ENCODE measurements at regions of chr20 and their contacts with region 1.

Region 1: DNA sequence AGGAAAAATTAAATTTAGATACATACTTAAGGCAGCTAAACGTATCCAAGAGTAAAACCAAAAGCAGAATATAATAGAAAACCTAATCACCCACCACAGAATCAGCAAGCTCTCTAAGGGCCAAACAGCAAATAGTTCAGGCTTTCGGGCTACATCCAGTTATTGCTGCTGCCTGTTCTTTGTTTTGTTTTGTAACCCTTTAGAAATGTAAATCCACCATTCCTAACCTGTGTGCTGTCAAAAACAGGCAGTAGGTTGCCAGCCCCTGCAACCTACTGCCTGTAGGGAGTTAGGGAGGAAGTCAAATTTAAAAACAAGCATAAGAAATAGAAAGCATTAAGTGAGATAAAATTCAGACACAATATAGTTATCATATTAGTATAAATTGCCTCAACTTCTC is 225.9 kb downstream of the PTPRT start:
- DNase-seq: no peak
- H3K4me3 ChIP-seq: no peak overlapping the region
- H3K27ac ChIP-seq: no peak overlapping the region
- H3K4me1 ChIP-seq: no peaks in the 10 kb centered on the region
- H3K27me3 ChIP-seq: peaks cover 33% of the 10 kb centered on the region
- CTCF ChIP-seq: no peak

Region 2: DNA sequence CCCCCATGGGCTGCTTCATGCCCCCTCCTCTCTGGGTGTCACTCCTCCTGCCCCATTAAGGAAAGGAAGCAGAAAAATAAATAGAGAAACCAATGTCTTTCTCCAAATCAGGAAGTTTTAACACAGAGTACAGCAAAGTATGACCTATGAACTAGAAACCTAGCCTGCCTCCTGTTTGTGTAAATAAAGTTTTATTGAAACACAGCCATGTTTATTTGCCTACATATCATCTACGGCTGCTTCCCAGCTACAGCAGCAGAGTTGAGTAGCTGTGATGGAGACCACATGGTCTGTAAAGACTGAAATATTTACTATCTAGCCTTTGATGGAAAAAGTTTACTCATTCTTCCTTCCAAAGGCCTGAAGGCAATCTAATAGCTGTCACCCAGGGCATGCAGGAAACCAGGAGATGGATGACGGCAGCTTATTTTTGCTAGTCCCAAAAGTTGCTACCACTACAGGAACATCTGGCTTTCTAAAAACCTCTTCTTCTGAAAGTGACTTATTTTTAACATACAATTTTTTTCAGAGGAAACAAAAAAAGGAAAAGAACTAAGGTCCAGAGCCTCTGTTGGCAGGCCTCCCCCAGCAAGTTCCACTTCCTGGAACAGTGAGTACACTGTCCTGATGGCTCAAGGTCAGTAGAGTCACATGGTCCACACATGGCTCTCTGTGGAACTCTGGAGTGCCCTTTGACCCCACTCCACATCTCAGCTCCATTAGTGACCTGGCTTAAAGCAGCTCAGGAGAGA is 61.9 kb before region 1 on chr20:
- CTCF ChIA-PET with region 1: no interaction called
- POLR2A ChIA-PET with region 1: no interaction called
- intact Hi-C with region 1: loop called (anchors 10 kb)
- DNase-seq: no peak
- H3K4me3 ChIP-seq: no peak overlapping the region
- H3K27ac ChIP-seq: no peak overlapping the region
- H3K4me1 ChIP-seq: no peaks in the 10 kb centered on the region
- H3K27me3 ChIP-seq: no peaks in the 10 kb centered on the region
- CTCF ChIP-seq: no peak

Measured in A673 (cell line).